ENCODE measurements at regions of chr1 and their contacts with region 1.

Region 1: DNA sequence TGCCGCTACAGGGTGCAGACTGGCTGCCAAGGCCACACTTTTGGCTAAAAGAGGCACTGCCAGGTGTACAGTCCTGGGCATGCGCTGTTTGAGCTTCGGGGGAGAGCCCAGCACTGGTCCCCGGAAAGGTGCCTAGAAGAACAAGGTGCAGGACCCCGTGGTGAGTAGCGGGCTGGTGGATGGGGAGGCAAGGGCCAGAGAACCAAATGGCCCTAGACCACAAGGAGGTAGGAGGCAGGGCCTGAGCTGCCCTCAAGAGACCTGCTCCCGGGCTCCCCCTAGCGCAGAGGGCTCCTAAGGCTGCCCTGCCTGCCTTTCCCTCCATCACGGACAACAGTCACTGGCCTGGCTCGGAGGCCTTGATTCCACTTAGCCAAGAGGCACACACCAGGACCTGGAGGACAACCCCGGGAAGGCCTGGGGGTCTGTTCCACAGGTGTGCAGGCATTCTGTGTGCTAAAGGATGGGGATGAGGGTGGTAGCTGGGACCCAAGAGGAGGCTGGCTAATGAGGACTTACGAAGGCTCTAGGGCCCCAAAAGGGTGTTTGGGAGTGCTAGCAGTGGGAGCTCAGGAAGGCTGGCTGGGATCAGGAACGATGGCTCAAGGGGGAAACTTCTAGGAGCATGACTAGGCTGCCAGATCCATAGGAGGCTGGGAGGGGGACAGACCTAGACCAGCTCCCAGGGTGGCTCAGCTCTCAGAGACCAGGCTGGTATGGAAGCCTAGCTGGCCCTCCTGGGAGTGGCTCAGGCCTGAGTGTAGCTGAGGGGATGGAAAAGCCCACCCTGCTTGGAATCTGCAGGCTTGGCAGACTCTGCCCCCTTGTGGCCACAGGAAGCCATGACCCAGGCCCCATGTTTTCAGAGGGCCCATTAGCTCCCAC is 742 bp downstream of the ARTN start:
- H3K4me3 ChIP-seq: no peak overlapping the region
- H3K27ac ChIP-seq: peak overlapping the region; percentile 7; the same call in 1 of the 2 replicates
- H3K4me1 ChIP-seq: peaks cover 3% of the 10 kb centered on the region; the same call in 1 of the 2 replicates
- CTCF ChIP-seq: peak; percentile 75

Region 2: GRCh38 chr1:43763497-43763973 is 170.8 kb before region 1 on chr1:
- CTCF ChIA-PET with region 1: interaction called, 555 read pairs
- POLR2A ChIA-PET with region 1: interaction called, 17 read pairs
- H3K4me3 ChIP-seq: no peak overlapping the region
- H3K27ac ChIP-seq: no peak overlapping the region
- H3K4me1 ChIP-seq: no peaks in the 10 kb centered on the region
- CTCF ChIP-seq: peak; percentile 87

Region 3: DNA sequence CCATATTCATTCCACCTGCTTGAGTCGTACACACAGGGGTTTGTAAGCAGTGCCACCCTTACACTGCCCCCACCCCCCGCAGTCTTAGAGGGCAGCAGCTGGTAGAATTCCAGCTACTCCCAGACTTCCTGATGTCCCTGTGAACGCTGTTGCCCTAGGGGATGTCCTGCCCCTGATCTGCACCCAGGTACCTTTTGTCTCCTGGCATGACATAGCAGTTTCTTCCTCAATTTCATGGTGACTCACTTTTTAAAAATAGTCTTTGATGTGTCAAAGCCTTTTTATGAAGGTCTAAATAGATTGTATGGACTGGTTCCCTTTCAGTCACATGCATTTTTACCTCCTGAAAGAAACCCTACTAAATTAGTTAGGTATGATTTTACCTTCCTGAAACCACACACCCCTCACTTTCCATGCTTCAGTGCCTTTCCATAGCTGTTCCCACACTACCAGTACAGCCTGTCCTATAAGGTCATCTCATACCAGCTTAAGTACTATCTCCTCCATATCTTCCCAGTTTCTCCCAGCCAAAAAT is 150.6 kb before region 1 on chr1:
- CTCF ChIA-PET with region 1: interaction called, 12 read pairs
- POLR2A ChIA-PET with region 1: no interaction called
- H3K4me3 ChIP-seq: no peak overlapping the region
- H3K27ac ChIP-seq: no peak overlapping the region
- H3K4me1 ChIP-seq: no peaks in the 10 kb centered on the region
- CTCF ChIP-seq: no peak

Region 4: DNA sequence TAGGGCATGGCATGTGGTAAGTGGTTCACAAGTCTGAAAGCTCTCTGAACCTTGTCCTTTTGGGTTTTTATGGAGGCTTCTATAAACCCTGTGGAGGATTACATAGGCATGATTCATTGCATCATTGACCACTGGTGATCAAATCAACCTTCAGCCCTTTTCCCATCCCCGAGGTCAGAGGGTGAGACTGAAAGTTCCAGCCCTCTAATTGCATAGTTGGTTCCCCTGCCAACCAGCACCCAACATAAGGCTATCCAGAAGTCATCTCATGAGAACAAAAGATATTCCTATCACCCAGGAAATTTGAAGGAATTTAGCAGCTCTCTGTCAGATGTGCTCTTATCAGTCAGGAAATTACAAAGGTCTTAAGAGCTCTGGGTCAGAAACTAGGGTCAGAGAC is 90.2 kb before region 1 on chr1:
- CTCF ChIA-PET with region 1: interaction called, 13 read pairs
- POLR2A ChIA-PET with region 1: no interaction called
- H3K4me3 ChIP-seq: no peak overlapping the region
- H3K27ac ChIP-seq: no peak overlapping the region
- H3K4me1 ChIP-seq: peaks cover 2% of the 10 kb centered on the region; the same call in 1 of the 2 replicates
- CTCF ChIP-seq: no peak

Region 5: DNA sequence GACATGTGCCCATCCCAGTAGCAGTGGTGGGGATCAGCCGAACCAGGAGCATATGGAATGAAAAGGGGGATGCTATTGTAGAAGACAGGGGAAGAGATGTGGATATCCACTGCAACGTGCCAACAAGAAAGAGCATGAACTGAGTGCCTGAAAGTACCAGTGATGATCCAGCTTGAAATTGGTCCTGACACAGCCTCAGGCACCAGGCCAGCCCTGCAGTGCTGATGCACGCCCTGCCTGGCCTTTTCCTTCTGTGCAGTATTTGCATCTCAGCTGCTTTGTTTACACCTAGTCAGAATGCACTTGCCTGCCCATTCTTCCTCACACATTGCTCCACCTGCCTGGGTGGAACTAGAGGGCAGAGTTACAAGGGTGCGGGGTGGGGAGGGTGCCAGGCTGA is 51.0 kb before region 1 on chr1:
- CTCF ChIA-PET with region 1: interaction called, 10 read pairs
- POLR2A ChIA-PET with region 1: no interaction called
- H3K4me3 ChIP-seq: no peak overlapping the region
- H3K27ac ChIP-seq: no peak overlapping the region
- H3K4me1 ChIP-seq: no peaks in the 10 kb centered on the region
- CTCF ChIP-seq: no peak

Region 6: GRCh38 chr1:43946236-43947060 is 12.1 kb after region 1 on chr1 and contains the start of gene IPO13:
- CTCF ChIA-PET with region 1: interaction called, 50 read pairs
- POLR2A ChIA-PET with region 1: interaction called, 8 read pairs
- H3K4me3 ChIP-seq: peak within 1 kb of the TSS; percentile 85
- H3K27ac ChIP-seq: peak within 1 kb of the TSS; percentile 89
- H3K4me1 ChIP-seq: 0 out of 2 replicates have a peak, but pooled peaks cover 4% of the 10 kb centered on the region
- CTCF ChIP-seq: peak; percentile 100

Region 7: GRCh38 chr1:44059956-44060355 is 125.6 kb after region 1 on chr1:
- CTCF ChIA-PET with region 1: interaction called, 11 read pairs
- POLR2A ChIA-PET with region 1: no interaction called
- H3K4me3 ChIP-seq: no peak overlapping the region
- H3K27ac ChIP-seq: no peak overlapping the region
- H3K4me1 ChIP-seq: no peaks in the 10 kb centered on the region
- CTCF ChIP-seq: no peak

Measured in HEK293 (cell line).